GM13977 (cell line): ENCODE measurements at regions of chr1 and their contacts with region 1.

Region 1: GRCh38 chr1:74689621-74690363 is 16.2 kb upstream of the ERICH3 start:
- DNase-seq: no peak
- CTCF ChIP-seq: peak; percentile 77

Region 2: DNA sequence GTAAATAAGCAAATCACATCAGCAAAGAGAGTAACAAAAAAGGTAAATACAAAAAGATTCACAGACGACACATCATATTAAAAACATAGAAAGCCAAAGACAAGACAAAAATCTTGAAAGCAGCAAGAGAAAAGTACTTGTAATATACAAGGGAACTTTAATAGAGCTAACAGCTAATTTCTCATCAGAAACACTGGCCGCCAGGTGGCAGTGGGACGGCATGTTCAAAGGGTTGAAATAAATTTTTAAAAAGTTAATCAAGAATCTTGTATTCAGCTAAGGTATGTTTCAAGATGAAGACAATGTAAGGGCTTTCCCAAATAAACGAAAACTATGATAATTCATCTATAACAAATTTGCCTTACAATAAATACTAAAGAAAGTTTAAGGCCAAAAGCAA is 849.9 kb before region 1 on chr1:
- in situ Hi-C with region 1: loop called (anchors 25 kb)
- DNase-seq: no peak
- CTCF ChIP-seq: peak; percentile 49

Region 3: DNA sequence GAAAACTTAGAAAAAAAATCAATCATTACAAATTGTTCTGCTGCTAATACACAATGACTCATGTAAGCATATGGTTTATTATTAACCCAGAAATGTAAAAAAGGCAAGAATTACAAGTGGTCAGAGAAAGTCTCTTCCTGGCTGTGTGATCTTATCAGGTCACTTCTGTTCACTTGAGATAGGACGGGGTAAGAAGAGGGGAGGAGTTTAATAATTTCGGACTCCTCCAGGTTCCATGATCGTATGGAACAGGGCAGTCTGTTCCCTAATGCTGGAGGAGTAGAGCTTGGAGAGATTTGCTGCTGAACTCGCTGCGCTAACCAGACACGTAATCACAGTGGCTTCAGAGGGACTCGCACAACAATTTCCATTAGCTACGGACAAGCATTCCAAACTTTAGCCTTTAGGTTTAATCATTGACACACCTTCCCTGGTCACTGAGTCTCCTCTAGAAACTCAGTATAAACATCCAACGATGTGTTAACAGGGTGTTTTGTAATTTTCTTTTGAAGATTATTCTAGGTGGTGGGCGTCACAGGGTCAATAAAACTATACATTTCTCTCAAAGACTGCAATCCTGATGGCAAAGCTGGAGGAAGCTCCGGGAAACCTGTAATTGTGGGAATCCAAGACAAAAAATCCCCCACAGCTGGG is 41.7 kb after region 1 on chr1:
- in situ Hi-C with region 1: no loop called
- DNase-seq: peak; percentile 38
- CTCF ChIP-seq: no peak